Breast epithelium (tissue), 4 donors: ENCODE measurements at regions of chr19 and their contacts with region 1.

Region 1: GRCh38 chr19:50415661-50416033 is 3.1 kb upstream of the SPIB start:
- DNase-seq: no peak
- H3K4me3 ChIP-seq: no peak overlapping the region
- H3K27ac ChIP-seq: no peak overlapping the region
- H3K4me1 ChIP-seq: no peaks in the 10 kb centered on the region
- H3K27me3 ChIP-seq: peaks cover 5 to 39% of the 10 kb centered on the region in 2 donors
- CTCF ChIP-seq: no peak
- POLR2A ChIP-seq: no peak

Region 2: DNA sequence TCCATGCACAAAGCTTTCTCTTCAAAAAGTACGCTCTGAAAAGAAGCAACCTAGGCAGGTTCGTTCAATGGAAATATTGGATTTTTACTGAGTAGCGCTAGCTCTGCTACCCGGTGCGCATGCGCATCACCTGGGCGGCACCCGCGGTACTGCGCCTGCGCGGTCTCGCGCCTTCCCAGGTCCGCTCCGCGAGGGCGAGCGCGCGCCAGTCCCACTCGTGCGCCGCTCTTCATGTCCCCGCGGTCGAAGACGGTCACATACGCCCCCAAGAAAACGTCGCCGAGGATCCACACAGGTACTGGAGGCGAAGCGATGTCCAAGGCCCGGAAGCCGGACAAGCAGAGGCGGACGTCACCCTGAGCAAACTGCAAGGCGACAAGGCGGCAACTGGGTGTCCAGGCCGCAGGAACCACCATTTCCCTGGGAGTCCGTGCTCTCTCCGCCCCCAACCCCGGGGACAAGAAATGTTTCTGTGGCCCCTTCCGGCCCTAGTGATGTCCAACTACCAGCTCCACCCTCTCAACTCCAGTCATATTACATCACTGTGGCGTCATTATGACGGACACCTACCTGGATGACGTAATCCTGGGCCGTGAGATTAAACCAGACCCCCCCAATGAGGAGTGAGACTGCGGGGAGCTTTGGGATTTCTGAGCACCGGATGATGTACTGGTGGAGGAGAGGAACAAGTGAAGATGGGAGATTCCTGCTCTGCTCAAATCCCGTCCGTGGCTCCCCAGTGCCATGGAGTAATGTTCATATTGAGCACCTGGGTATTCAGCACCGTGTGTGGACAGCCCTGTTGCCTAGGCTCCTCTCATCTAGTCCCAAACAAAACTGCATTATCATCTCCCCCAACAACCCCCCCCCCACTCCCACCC is 81.7 kb before region 1 on chr19:
- intact Hi-C with region 1: no loop called
- DNase-seq: peak; percentile 35 to 74
- H3K4me3 ChIP-seq: peak overlapping the region; percentile 27 to 76 (median 62)
- H3K27ac ChIP-seq: peak overlapping the region; percentile 88 to 91
- H3K4me1 ChIP-seq: peaks cover 0 to 5% of the 10 kb centered on the region in 2 donors
- H3K27me3 ChIP-seq: peaks cover 3 to 15% of the 10 kb centered on the region in 2 donors
- CTCF ChIP-seq: no peak
- POLR2A ChIP-seq: peak; percentile 81

Region 3: GRCh38 chr19:50437862-50438449 is 22.3 kb after region 1 on chr19:
- intact Hi-C with region 1: loop called (anchors 2 kb)
- DNase-seq: no peak
- H3K4me3 ChIP-seq: no peak overlapping the region
- H3K27ac ChIP-seq: no peak overlapping the region
- H3K4me1 ChIP-seq: no peaks in the 10 kb centered on the region
- H3K27me3 ChIP-seq: no peaks in the 10 kb centered on the region
- CTCF ChIP-seq: no peak
- POLR2A ChIP-seq: no peak